Activated naive CD4-positive, alpha-beta T cell treated with anti-CD3 and anti-CD28 coated beads for 36 hours (primary cell): ENCODE measurements at regions of chr7 and their contacts with region 1.

Region 1: DNA sequence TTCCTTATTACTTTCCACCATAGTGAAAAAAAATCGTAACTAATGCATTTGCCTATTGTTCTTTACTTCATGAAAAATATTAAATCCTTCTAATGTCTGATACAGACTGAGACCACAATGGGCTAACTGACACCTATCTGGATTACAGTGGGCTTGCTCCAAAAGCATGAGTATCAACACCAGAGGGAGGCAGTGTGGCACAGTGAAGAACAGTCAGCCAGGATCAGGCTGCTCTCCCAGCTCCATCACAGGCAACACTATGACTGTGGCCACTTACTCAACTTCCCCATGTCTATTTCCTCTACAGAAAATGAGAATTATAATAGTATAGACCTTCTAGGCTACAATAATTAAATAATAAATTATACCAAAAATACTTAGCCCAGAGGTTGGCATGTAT is 97.2 kb downstream of the SLC25A13 start:
- DNase-seq: peak; percentile 24
- H3K4me3 Mint-ChIP-seq: no peak overlapping the region
- H3K27ac Mint-ChIP-seq: no peak overlapping the region
- H3K4me1 Mint-ChIP-seq: peaks cover 4% of the 10 kb centered on the region
- H3K27me3 Mint-ChIP-seq: no peaks in the 10 kb centered on the region

Region 2: GRCh38 chr7:96414931-96415292 is 190.2 kb after region 1 on chr7:
- CTCF ChIA-PET with region 1: no interaction called
- intact Hi-C with region 1: loop called (anchors 10 kb)
- DNase-seq: peak; percentile 69
- H3K4me3 Mint-ChIP-seq: no peak overlapping the region
- H3K27ac Mint-ChIP-seq: no peak overlapping the region
- H3K4me1 Mint-ChIP-seq: no peaks in the 10 kb centered on the region
- H3K27me3 Mint-ChIP-seq: peaks cover 18% of the 10 kb centered on the region

Region 3: GRCh38 chr7:96471606-96472005 is 246.9 kb after region 1 on chr7:
- CTCF ChIA-PET with region 1: no interaction called
- intact Hi-C with region 1: no loop called
- DNase-seq: no peak
- H3K4me3 Mint-ChIP-seq: no peak overlapping the region
- H3K27ac Mint-ChIP-seq: no peak overlapping the region
- H3K4me1 Mint-ChIP-seq: peaks cover 16% of the 10 kb centered on the region
- H3K27me3 Mint-ChIP-seq: peaks cover 5% of the 10 kb centered on the region